HepG2 (cell line): ENCODE measurements at regions of chr9 and their contacts with region 1.

Region 1: DNA sequence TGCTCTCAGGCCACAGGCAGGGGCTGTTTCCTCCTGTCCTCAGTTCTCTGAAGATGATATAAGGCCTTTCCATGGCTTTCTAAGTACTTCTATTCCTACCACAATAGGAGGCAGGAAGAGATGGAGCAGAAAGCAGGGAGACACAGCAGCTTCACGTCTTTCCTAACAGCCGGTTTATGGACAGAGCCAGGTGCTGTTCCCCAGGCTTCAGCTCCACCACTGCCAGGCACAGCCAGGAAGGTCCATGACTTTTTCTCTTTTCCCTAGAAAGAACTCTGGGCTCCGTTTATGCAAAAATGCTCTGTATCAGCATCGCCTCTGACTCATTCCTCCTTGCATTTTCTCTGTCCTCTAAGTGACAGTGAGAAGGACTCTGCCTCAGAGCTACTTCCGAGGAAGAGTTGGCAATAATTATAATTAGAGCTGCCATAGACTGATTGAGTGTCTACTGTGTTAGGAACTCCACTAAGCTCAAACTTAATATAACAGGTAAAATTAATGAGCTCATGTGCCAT is 478.5 kb downstream of the RASEF start:
- DNase-seq: no peak
- ATAC-seq: no peak
- H3K4me3 ChIP-seq: no peak overlapping the region
- H3K27ac ChIP-seq: peak overlapping the region; percentile 67
- H3K4me1 ChIP-seq: peaks cover 99% of the 10 kb centered on the region
- H3K27me3 ChIP-seq: no peaks in the 10 kb centered on the region
- CTCF ChIP-seq: no peak
- EP300 ChIP-seq: no peak
- POLR2A ChIP-seq: no peak
- RAD21 ChIP-seq: no peak

Region 2: DNA sequence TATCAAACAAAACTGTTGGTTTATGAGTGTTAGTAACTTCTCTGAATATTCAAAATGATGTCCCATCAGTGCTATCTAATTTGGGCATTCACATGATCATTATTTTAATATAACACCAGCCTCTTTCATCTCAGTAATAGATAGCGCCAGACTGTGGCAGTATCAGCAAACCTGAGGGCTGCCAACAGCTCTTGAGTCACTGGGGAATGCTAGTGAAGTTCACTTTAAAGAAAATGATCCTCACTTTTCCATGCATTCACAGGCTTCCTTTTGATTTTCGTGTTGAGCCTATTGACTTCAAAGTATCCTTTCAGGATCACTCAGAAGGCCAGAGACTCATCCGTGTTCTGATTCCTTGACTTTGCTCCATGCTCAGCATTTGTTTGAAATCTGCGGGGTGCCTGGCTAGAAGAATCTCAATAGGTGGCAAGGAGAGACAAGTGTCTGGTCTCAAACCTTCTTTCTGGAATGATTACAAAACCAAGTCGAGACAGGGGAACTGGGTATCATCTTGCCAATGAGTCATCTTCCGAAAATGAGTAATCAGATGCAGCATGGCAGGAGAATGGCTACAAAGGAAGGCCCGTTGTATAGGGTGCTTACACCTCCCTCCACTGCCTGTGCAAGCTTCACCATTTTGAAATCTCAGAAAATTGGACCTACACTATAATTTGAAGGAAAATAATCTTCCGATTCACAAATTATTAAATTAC is 30.6 kb before region 1 on chr9:
- CTCF ChIA-PET with region 1: no interaction called
- POLR2A ChIA-PET with region 1: no interaction called
- in situ Hi-C with region 1: loop called (anchors 5 kb)
- intact Hi-C with region 1: no loop called
- DNase-seq: no peak
- ATAC-seq: no peak
- H3K4me3 ChIP-seq: no peak overlapping the region
- H3K27ac ChIP-seq: no peak overlapping the region
- H3K4me1 ChIP-seq: peaks cover 43% of the 10 kb centered on the region
- H3K27me3 ChIP-seq: no peaks in the 10 kb centered on the region
- CTCF ChIP-seq: no peak
- EP300 ChIP-seq: no peak
- POLR2A ChIP-seq: no peak
- RAD21 ChIP-seq: no peak

Region 3: GRCh38 chr9:82601293-82601771 is 16.9 kb after region 1 on chr9:
- CTCF ChIA-PET with region 1: no interaction called
- POLR2A ChIA-PET with region 1: interaction called, 25 read pairs
- in situ Hi-C with region 1: no loop called
- intact Hi-C with region 1: loop called (anchors 1 kb)
- DNase-seq: peak; percentile 66
- ATAC-seq: peak; percentile 77
- H3K4me3 ChIP-seq: peak overlapping the region in 2 of 3 experiments; percentile 56 to 73; a peak in 4 of 6 replicates
- H3K27ac ChIP-seq: peak overlapping the region; percentile 86
- H3K4me1 ChIP-seq: peaks cover 99% of the 10 kb centered on the region
- H3K27me3 ChIP-seq: no peaks in the 10 kb centered on the region
- CTCF ChIP-seq: no peak
- EP300 ChIP-seq: no peak
- POLR2A ChIP-seq: no peak
- RAD21 ChIP-seq: no peak